ENCODE measurements at regions of chr1 and their contacts with region 1.

Region 1: GRCh38 chr1:80218112-80218511 is 1211.6 kb upstream of the ADGRL4 start:
- DNase-seq: peak; percentile 76
- H3K4me3 Mint-ChIP-seq: no peak overlapping the region
- H3K27ac Mint-ChIP-seq: peak overlapping the region; percentile 91
- H3K4me1 Mint-ChIP-seq: peaks cover 13% of the 10 kb centered on the region
- H3K27me3 Mint-ChIP-seq: no peaks in the 10 kb centered on the region
- CTCF ChIP-seq: peak; percentile 59

Region 2: GRCh38 chr1:78839704-78840277 is 1378.3 kb before region 1 on chr1:
- CTCF ChIA-PET with region 1: no interaction called
- POLR2A ChIA-PET with region 1: no interaction called
- intact Hi-C with region 1: loop called (anchors 5 kb)
- DNase-seq: peak; percentile 58
- H3K4me3 Mint-ChIP-seq: no peak overlapping the region
- H3K27ac Mint-ChIP-seq: no peak overlapping the region
- H3K4me1 Mint-ChIP-seq: peaks cover 16% of the 10 kb centered on the region
- H3K27me3 Mint-ChIP-seq: no peaks in the 10 kb centered on the region
- CTCF ChIP-seq: peak; percentile 50

Region 3: DNA sequence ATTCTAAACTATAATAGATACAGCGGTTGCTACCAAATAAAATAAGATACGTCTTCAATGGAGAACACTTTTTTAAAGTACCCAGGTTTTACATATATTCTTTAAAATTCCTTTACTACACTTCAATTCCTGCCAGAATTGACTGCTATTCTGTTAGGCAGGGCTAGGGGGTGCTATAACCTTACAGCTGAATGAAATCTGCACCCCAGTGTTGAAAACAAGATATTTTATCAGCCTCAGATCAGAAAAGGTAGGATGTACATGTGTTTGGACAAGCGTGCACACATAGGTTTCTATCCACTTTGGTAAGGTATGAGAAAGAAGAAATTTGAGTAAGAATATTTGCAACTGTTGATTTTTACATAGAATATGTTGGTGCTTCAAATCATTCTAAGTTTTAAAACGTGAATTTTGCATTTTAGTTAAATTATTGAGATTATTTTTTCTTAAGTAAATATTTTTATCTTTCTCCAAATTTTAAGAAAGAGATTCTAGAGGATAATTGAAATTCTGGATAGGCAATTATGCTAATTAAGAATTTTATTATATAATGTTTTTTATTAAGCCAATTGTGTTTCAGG is 720.8 kb before region 1 on chr1:
- CTCF ChIA-PET with region 1: interaction called, 3 read pairs
- POLR2A ChIA-PET with region 1: no interaction called
- intact Hi-C with region 1: loop called (anchors 1 kb)
- DNase-seq: peak; percentile 53
- H3K4me3 Mint-ChIP-seq: no peak overlapping the region
- H3K27ac Mint-ChIP-seq: no peak overlapping the region
- H3K4me1 Mint-ChIP-seq: no peaks in the 10 kb centered on the region
- H3K27me3 Mint-ChIP-seq: no peaks in the 10 kb centered on the region
- CTCF ChIP-seq: peak; percentile 89

Region 4: GRCh38 chr1:80542231-80542630 is 324.1 kb after region 1 on chr1:
- CTCF ChIA-PET with region 1: no interaction called
- POLR2A ChIA-PET with region 1: no interaction called
- intact Hi-C with region 1: loop called (anchors 10 kb)
- DNase-seq: no peak
- H3K4me3 Mint-ChIP-seq: no peak overlapping the region
- H3K27ac Mint-ChIP-seq: no peak overlapping the region
- H3K4me1 Mint-ChIP-seq: peaks cover 10% of the 10 kb centered on the region
- H3K27me3 Mint-ChIP-seq: no peaks in the 10 kb centered on the region
- CTCF ChIP-seq: no peak

Region 5: GRCh38 chr1:81305997-81306452 is 1087.9 kb after region 1 on chr1:
- CTCF ChIA-PET with region 1: no interaction called
- POLR2A ChIA-PET with region 1: no interaction called
- intact Hi-C with region 1: loop called (anchors 10 kb)
- DNase-seq: peak; percentile 28
- H3K4me3 Mint-ChIP-seq: no peak overlapping the region
- H3K27ac Mint-ChIP-seq: no peak overlapping the region
- H3K4me1 Mint-ChIP-seq: peaks cover 21% of the 10 kb centered on the region
- H3K27me3 Mint-ChIP-seq: no peaks in the 10 kb centered on the region
- CTCF ChIP-seq: no peak

Region 6: GRCh38 chr1:81760477-81761097 is 1542.5 kb after region 1 on chr1:
- CTCF ChIA-PET with region 1: no interaction called
- POLR2A ChIA-PET with region 1: interaction called, 5 read pairs
- intact Hi-C with region 1: loop called (anchors 2 kb)
- DNase-seq: peak; percentile 29
- H3K4me3 Mint-ChIP-seq: no peak overlapping the region
- H3K27ac Mint-ChIP-seq: no peak overlapping the region
- H3K4me1 Mint-ChIP-seq: no peaks in the 10 kb centered on the region
- H3K27me3 Mint-ChIP-seq: no peaks in the 10 kb centered on the region
- CTCF ChIP-seq: peak; percentile 35

Measured in MCF 10A (cell line).